K562 (cell line): ENCODE measurements at regions of chr21 and their contacts with region 1.

Region 1: DNA sequence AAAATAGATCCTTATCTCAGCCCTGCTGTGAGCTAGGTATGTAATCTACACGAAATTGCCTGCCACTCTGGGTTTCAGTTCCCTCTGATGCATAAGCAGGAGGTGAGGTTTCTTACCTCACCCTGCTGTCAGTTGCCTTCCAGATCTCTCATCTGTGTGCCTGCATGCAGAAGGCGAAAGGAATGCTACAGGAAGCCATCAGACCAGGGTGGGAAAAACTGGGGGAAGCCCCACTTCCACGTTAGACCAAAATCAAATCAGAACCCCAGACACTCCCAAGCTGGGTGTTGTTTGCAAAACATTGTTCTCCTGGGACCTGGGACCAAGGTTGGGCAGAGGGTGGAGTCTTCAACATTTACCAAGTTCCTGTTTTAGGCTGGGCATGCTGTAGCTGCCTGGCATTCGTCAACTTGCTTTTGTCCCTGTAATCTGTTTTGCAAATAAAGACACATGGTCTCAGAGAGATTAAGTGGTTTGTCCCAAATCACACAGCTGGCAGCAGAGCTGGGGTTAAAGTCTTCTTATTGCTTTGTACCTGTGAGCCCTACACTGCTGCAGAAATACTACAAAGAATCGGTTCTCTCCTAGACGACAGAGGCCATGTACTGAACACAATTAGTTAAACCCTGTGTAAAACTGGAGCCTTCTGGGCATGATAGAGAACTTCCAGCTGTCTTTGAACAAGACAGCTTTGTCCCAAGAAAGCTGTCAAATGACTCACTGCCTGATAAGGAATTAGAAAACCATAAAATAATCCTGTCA is 389.7 kb upstream of the RUNX1 start:
- DNase-seq: no peak
- ATAC-seq: no peak
- H3K4me3 ChIP-seq: no peak overlapping the region
- H3K27ac ChIP-seq: no peak overlapping the region
- H3K4me1 ChIP-seq: 0 out of 5 replicates have a peak, but pooled peaks cover 0 to 7% of the 10 kb centered on the region in 2 experiments
- H3K27me3 ChIP-seq: peaks cover 2 to 4% of the 10 kb centered on the region in 2 experiments; a peak in 2 of 5 replicates
- CTCF ChIP-seq: no peak
- EP300 ChIP-seq: no peak
- POLR2A ChIP-seq: no peak
- RAD21 ChIP-seq: no peak

Region 2: GRCh38 chr21:33451634-33452071 is 1987.2 kb before region 1 on chr21:
- CTCF ChIA-PET with region 1: no interaction called
- POLR2A ChIA-PET with region 1: no interaction called
- in situ Hi-C with region 1: no loop called
- intact Hi-C with region 1: no loop called
- DNase-seq: peak in 1 of 4 experiments; percentile 3
- ATAC-seq: peak; percentile 51
- H3K4me3 ChIP-seq: no peak overlapping the region
- H3K27ac ChIP-seq: no peak overlapping the region
- H3K4me1 ChIP-seq: no peaks in the 10 kb centered on the region
- H3K27me3 ChIP-seq: no peaks in the 10 kb centered on the region
- CTCF ChIP-seq: no peak
- EP300 ChIP-seq: no peak
- POLR2A ChIP-seq: no peak
- RAD21 ChIP-seq: no peak

Region 3: DNA sequence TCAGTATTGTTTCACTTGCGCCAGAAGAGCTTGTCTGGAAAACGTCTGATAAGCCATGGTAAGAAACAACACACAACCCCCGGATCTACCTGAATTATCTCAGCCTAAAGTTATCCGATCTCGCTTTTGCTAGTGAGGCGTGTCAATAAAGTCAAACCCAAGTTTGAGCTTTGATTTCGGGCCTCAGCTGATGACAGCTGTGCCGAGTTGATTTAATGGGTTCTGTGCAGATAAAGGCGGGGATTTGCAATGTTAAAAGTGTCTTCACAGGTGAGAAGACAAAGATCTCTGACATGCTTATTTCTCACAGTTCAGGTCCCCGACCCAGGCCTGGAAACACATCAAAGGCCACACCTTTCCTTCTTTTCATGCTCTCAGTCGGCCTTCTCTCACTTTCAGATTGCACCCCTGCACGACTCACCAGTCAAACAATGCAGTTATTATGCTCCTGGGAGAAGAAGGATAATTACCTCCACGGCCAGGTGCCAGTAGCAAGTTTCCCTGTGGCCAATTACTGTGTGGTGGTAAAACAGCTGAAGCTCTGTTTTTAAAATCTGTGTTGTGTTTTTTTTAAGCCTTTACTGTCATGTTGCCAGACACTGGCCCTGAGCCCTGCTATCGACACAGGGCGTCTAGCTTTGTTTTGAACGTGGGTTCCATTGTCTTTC is 144.5 kb before region 1 on chr21:
- CTCF ChIA-PET with region 1: no interaction called
- POLR2A ChIA-PET with region 1: no interaction called
- in situ Hi-C with region 1: no loop called
- intact Hi-C with region 1: no loop called
- DNase-seq: no peak
- ATAC-seq: no peak
- H3K4me3 ChIP-seq: no peak overlapping the region
- H3K27ac ChIP-seq: no peak overlapping the region
- H3K4me1 ChIP-seq: no peaks in the 10 kb centered on the region; a peak in 1 of 5 replicates
- H3K27me3 ChIP-seq: peaks cover 0 to 5% of the 10 kb centered on the region in 2 experiments; a peak in 2 of 5 replicates
- CTCF ChIP-seq: no peak
- EP300 ChIP-seq: no peak
- POLR2A ChIP-seq: no peak
- RAD21 ChIP-seq: no peak

Region 4: DNA sequence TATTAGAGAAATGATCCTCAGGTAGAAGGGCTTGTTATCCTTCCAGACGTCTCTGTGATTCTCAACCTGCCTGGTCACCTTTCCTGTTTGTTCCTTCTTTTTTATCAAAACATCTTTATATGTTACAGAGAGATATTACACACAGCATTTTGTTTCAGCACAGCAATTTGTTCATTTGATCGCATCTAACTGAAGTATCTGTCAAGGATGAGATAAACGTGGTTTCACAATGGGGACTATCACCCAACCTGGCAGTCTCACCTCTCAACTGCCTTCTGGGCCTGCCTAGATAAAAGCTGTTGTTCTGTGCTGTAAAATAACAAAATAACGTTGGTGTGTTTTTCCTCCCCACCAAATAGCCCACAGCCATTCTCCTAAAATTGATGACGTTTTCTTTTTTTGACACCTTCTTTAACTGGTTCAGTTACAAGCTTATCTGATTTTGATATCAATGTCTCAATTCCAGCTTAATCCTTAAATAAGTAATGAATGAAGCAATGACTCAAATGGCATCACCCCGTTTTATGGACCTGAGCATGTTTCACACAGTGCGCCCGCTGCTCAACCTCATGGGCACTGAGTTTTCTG is 21.9 kb before region 1 on chr21:
- CTCF ChIA-PET with region 1: no interaction called
- POLR2A ChIA-PET with region 1: interaction called, 10 read pairs
- in situ Hi-C with region 1: no loop called
- intact Hi-C with region 1: no loop called
- DNase-seq: no peak
- ATAC-seq: no peak
- H3K4me3 ChIP-seq: no peak overlapping the region
- H3K27ac ChIP-seq: no peak overlapping the region
- H3K4me1 ChIP-seq: no peaks in the 10 kb centered on the region
- H3K27me3 ChIP-seq: no peaks in the 10 kb centered on the region
- CTCF ChIP-seq: no peak
- EP300 ChIP-seq: no peak; the same call in 1 of the 2 replicates
- POLR2A ChIP-seq: no peak
- RAD21 ChIP-seq: no peak

Region 5: DNA sequence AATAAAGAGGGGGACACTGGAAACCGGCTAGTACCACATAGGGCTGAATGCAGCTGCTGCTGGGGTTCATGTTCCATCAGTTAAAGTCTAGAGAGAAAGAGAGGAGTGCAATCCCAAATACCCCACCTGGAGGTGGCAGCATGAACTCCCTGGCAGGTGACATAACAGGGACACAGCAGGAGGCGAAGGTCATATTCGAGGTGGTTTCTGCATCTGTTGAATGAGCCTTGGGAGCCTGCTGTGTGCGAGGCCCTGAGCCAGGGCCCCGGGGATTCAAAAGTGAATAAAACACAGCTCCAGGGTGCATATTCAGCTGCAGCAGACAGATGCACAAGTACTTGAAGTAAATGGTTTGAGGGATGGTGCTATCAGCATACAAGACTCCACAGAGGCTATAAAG is 164.7 kb after region 1 on chr21:
- CTCF ChIA-PET with region 1: no interaction called
- POLR2A ChIA-PET with region 1: no interaction called
- in situ Hi-C with region 1: no loop called
- intact Hi-C with region 1: loop called (anchors 10 kb)
- DNase-seq: no peak
- ATAC-seq: 0 out of 3 replicates have a peak, but pooled peaks have one; percentile 47
- H3K4me3 ChIP-seq: no peak overlapping the region
- H3K27ac ChIP-seq: no peak overlapping the region
- H3K4me1 ChIP-seq: no peaks in the 10 kb centered on the region
- H3K27me3 ChIP-seq: peaks cover 4 to 22% of the 10 kb centered on the region in 2 experiments; a peak in 4 of 5 replicates
- CTCF ChIP-seq: peak in 2 of 3 experiments; percentile 23 to 37; a peak in 2 of 6 replicates
- EP300 ChIP-seq: no peak
- POLR2A ChIP-seq: no peak
- RAD21 ChIP-seq: peak in 1 of 2 experiments; percentile 39; a peak in 2 of 4 replicates

Region 6: GRCh38 chr21:35829067-35829466 is 390.2 kb after region 1 on chr21:
- CTCF ChIA-PET with region 1: no interaction called
- POLR2A ChIA-PET with region 1: no interaction called
- in situ Hi-C with region 1: loop called (anchors 10 kb)
- intact Hi-C with region 1: no loop called
- DNase-seq: no peak
- ATAC-seq: no peak
- H3K4me3 ChIP-seq: no peak overlapping the region
- H3K27ac ChIP-seq: no peak overlapping the region
- H3K4me1 ChIP-seq: no peaks in the 10 kb centered on the region
- H3K27me3 ChIP-seq: peaks cover 4 to 8% of the 10 kb centered on the region in 2 experiments; a peak in 1 of 5 replicates
- CTCF ChIP-seq: no peak
- EP300 ChIP-seq: no peak
- POLR2A ChIP-seq: no peak
- RAD21 ChIP-seq: no peak